ENCODE measurements at regions of chr12 and their contacts with region 1.

Region 1: GRCh38 chr12:8226355-8226754 is 1.1 kb downstream of the FAM90A1 start:
- DNase-seq: no peak
- ATAC-seq: no peak
- H3K4me3 ChIP-seq: no peak overlapping the region
- H3K27ac ChIP-seq: no peak overlapping the region
- H3K4me1 ChIP-seq: no peaks in the 10 kb centered on the region
- H3K27me3 ChIP-seq: no peaks in the 10 kb centered on the region
- CTCF ChIP-seq: no peak

Region 2: DNA sequence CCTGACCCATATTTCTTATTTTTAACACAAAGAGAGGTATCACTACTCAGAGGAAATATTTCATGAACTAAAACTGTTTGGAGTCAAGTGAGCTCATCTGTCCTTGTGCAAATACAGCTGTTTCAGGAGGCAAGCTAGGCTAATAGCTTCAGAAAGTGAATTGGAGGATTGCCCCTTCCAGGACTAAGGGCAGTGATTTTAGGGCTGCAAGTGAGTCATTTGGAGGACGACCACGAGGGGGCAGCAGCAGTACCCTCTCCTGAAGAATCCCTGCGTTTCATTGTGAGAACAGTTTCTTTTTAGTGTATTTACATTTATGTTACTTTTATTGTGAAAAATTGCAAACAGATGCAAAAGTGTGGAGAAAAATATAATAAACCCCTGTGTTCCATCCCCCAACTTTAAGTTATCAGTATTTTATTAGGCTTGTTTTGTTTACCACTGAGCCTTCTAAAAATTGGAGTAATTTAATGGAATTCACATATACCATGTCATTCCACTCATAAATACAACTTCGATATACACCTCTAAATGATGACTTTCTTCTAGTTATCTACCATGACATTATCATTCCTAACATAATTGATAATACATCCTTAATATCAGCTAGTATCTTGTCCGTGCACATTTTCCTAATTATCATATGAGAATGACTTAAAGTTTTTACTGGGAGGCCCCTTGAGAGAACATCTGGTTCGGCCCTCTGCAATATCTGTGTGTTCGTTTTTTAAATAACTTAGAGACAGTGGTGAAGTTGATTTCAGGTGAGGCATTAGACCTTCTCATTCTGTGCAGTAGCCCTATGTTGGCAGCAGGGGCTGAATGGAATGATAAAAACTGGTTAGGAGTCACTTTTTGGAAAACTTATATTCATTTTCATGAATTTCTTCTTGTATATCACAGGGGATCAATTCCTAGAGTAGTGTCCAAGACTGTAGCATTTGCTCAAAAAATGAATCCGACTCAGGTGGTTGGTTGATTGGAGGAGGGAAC is 180.1 kb before region 1 on chr12:
- CTCF ChIA-PET with region 1: interaction called, 11 read pairs
- POLR2A ChIA-PET with region 1: no interaction called
- in situ Hi-C with region 1: no loop called
- intact Hi-C with region 1: no loop called
- DNase-seq: peak; percentile 38
- ATAC-seq: peak; percentile 83
- H3K4me3 ChIP-seq: no peak overlapping the region
- H3K27ac ChIP-seq: no peak overlapping the region
- H3K4me1 ChIP-seq: no peaks in the 10 kb centered on the region
- H3K27me3 ChIP-seq: no peaks in the 10 kb centered on the region
- CTCF ChIP-seq: peak; percentile 86

Region 3: GRCh38 chr12:8108808-8109398 is 117.5 kb before region 1 on chr12:
- CTCF ChIA-PET with region 1: interaction called, 10 read pairs
- POLR2A ChIA-PET with region 1: no interaction called
- in situ Hi-C with region 1: no loop called
- intact Hi-C with region 1: no loop called
- DNase-seq: peak; percentile 57
- ATAC-seq: peak; percentile 75
- H3K4me3 ChIP-seq: no peak overlapping the region
- H3K27ac ChIP-seq: no peak overlapping the region
- H3K4me1 ChIP-seq: no peaks in the 10 kb centered on the region
- H3K27me3 ChIP-seq: no peaks in the 10 kb centered on the region
- CTCF ChIP-seq: peak; percentile 86

Measured in Panc1 (cell line).